Heart right ventricle (tissue), 16 donors: ENCODE measurements at regions of chr2 and their contacts with region 1.

Region 1: DNA sequence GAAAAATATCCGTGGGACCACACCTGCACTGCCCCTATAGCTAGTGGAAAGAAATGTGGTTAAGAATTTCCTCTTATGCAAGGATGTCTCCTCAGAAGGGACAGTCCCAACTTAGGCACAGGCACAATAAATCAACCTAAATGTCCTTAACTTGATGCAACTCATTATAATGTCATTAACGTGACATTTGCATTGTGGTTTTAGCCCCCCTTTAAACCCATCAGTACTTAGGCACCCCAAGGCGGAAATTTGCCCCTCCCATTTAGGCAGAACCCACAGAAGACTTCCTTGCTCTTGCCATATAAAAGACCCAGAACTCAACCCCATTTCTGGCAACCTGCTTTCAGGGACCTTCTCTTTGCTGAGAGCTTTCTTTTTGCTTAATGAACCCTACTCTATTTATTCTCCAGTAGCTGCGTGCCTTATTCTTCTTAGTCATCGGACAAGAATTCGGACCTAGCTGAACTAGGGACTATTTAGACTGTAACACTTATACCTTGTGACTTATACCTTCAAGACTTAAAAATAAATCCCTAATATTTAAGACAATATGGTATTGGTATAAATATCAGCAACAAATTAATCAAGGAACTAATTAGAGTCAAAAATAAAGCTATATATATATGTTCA is 1281.6 kb upstream of the TMEFF2 start:
- DNase-seq: no peak
- ATAC-seq: no peak
- H3K4me3 ChIP-seq: no peak overlapping the region
- H3K27ac ChIP-seq: no peak overlapping the region
- H3K4me1 ChIP-seq: no peaks in the 10 kb centered on the region
- H3K27me3 ChIP-seq: no peaks in the 10 kb centered on the region
- CTCF ChIP-seq: no peak

Region 2: GRCh38 chr2:192948316-192948715 is 528.0 kb before region 1 on chr2:
- intact Hi-C with region 1: no loop called
- DNase-seq: no peak
- ATAC-seq: no peak
- H3K4me3 ChIP-seq: no peak overlapping the region
- H3K27ac ChIP-seq: no peak overlapping the region
- H3K4me1 ChIP-seq: no peaks in the 10 kb centered on the region
- H3K27me3 ChIP-seq: no peaks in the 10 kb centered on the region
- CTCF ChIP-seq: no peak

Region 3: GRCh38 chr2:193141998-193142397 is 334.3 kb before region 1 on chr2:
- intact Hi-C with region 1: no loop called
- DNase-seq: no peak
- ATAC-seq: no peak
- H3K4me3 ChIP-seq: no peak overlapping the region
- H3K27ac ChIP-seq: no peak overlapping the region
- H3K4me1 ChIP-seq: no peaks in the 10 kb centered on the region
- H3K27me3 ChIP-seq: no peaks in the 10 kb centered on the region
- CTCF ChIP-seq: no peak

Region 4: DNA sequence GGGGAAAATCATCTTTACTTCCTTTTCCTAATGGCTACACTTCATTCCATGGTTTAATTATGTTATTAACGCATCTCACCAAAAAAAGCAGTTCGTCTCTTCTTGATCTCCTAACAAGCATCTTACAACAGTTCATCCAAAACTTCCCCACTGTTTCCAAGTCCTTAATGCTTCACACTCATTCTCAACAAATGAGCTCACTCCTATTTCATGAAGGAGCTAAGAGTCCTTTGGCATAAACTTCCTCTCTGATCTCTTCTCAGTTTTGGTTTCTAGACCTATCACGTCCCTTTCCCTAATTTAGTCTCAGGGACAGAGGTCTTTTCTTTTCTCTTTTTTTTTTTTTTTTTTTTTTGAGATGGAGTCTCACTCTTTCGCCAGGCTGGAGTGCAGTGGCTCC is 1974.9 kb after region 1 on chr2:
- intact Hi-C with region 1: loop called in 1 of 10 experiments (anchors 5 kb)
- DNase-seq: no peak
- ATAC-seq: peak in 6 of 8 donors; percentile 56 to 86 (median 64)
- H3K4me3 ChIP-seq: no peak overlapping the region
- H3K27ac ChIP-seq: peak overlapping the region in 4 of 10 donors; percentile 35 to 47 (median 42)
- H3K4me1 ChIP-seq: no peaks in the 10 kb centered on the region
- H3K27me3 ChIP-seq: no peaks in the 10 kb centered on the region
- CTCF ChIP-seq: no peak